Activated CD8-positive, alpha-beta T cell treated with anti-CD3 and anti-CD28 coated beads for 36 hours (primary cell): ENCODE measurements at regions of chr10 and their contacts with region 1.

Region 1: DNA sequence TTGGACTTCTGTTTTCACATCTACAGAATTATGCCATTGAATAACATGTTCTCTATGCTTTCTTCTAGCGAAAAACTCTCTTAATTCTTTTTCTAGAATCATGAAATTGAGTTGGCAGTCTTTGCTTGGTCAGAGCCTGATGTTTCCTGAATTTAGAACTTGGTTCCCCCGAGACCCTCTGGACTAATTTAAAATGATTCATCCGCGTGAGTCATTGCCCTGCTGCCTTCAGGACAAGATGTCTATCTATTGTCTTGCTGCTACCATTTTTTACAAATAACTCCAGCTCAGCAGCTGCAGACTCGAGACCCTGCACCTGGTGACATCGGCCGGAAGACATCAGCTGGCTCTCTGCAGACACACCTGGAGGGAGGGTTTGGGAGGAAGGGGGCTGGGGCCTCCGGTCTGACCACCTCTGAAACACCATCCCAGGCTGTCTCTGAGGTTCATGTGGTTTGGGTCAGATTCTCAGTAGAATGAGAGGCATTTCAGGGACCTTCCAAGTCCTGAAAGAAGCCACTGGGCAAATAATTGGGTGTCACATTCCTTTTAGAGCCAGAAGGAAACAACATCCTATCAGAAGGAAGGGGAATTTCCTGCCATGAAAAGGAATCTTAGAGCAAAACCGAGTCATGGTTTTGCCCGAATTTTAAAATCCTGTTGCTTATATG is 20.9 kb upstream of the KLF6 start:
- DNase-seq: peak; percentile 70
- ATAC-seq: no peak
- H3K4me3 Mint-ChIP-seq: peak overlapping the region; percentile 45
- H3K27ac Mint-ChIP-seq: no peak overlapping the region
- H3K4me1 Mint-ChIP-seq: peaks cover 68% of the 10 kb centered on the region
- H3K27me3 Mint-ChIP-seq: no peaks in the 10 kb centered on the region
- CTCF ChIP-seq: no peak

Region 2: DNA sequence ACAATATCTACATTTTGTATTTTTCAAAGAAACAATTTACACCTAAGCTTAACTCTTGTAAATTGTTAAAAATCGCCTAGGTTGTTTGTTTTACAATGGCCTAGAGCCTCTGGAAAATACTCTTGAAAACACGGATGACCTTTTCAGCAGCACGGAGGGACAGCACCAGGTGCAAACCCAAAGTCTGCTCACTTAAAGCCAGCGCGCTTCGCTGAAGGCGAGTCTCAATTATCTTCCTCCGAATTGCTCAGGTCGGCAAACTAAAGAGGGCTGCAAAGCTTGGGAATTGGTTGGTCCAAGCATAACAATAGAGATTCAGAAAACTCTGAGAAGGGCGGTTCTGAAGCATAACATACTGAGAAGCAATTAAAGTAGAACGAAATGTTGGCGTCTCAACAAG is 493.5 kb before region 1 on chr10:
- CTCF ChIA-PET with region 1: no interaction called
- POLR2A ChIA-PET with region 1: no interaction called
- intact Hi-C with region 1: no loop called
- DNase-seq: no peak
- ATAC-seq: no peak
- H3K4me3 Mint-ChIP-seq: no peak overlapping the region
- H3K27ac Mint-ChIP-seq: no peak overlapping the region
- H3K4me1 Mint-ChIP-seq: no peaks in the 10 kb centered on the region
- H3K27me3 Mint-ChIP-seq: peaks cover 32% of the 10 kb centered on the region
- CTCF ChIP-seq: no peak

Region 3: DNA sequence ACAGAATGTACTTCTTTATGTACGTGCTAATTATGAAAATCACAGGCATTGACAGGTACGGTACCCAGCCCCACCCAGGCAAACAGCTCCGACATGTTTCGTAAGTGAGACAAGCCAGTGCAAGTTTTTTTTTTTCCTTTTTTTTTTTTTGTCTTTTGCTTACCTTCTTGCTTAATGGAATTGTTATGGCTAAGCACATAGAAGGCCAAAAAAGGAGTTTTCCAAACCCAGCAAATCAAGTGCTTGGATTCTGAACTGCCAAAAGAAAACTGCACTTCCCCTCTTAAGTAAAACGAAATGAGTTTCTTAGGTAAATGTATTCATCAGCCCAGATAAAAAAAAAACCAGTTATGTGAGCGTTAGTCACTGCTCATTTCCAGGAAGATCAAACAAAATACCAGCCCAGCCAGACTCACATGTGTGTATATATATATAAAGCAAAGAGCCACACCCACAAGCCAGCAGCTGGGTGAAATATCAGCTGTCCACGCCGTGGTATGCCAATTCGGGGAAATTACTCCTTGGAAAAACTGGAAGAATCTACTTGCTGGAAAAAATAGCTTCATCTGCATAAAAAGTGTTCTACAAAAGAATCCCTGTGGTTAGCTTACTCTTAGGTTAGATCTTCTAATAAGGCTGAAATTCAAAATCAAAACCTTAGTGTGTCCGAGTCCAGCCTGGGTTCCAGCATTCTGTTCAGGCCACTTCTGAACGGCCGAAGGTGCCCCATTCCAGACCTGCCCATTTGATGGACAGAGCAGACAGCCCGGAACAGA is 28.9 kb before region 1 on chr10:
- CTCF ChIA-PET with region 1: no interaction called
- POLR2A ChIA-PET with region 1: interaction called, 281 read pairs
- intact Hi-C with region 1: loop called (anchors 2 kb)
- DNase-seq: peak; percentile 76
- ATAC-seq: peak; percentile 66
- H3K4me3 Mint-ChIP-seq: peak overlapping the region; percentile 56
- H3K27ac Mint-ChIP-seq: peak overlapping the region; percentile 85
- H3K4me1 Mint-ChIP-seq: peaks cover 71% of the 10 kb centered on the region
- H3K27me3 Mint-ChIP-seq: no peaks in the 10 kb centered on the region
- CTCF ChIP-seq: no peak

Region 4: DNA sequence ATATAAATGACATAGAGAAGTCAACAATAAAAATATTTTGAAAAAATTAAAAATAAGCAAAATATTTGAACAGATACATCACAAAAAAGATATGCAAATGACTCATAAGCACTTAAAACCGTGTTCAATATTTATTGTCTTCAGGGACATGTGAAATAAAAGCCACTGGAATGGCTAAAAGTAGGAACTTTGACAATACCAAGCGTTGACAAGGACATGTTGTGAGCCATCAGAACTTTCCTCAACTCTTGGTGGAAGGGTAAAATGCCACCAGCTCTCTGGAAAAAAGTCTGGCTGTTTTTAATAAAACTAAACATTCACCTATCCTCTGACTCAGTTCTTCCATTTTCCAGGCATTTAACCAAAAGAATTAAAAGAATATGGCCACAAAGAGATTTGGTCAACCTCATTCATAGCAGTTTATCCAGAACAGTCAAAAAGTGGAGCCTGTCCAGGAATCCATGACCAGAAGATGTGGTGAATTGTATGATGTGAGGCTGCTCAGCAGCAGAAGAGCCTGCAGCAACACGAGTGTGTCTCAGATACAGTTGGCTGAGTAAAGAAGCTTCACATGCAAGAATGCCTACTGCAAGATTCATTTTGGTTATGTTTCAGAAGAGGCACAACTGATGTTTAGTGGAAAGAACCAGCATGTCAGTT is 13.8 kb before region 1 on chr10:
- CTCF ChIA-PET with region 1: no interaction called
- POLR2A ChIA-PET with region 1: interaction called, 10 read pairs
- intact Hi-C with region 1: no loop called
- DNase-seq: no peak
- ATAC-seq: peak; percentile 53
- H3K4me3 Mint-ChIP-seq: no peak overlapping the region
- H3K27ac Mint-ChIP-seq: no peak overlapping the region
- H3K4me1 Mint-ChIP-seq: peaks cover 19% of the 10 kb centered on the region
- H3K27me3 Mint-ChIP-seq: no peaks in the 10 kb centered on the region
- CTCF ChIP-seq: no peak

Region 5: DNA sequence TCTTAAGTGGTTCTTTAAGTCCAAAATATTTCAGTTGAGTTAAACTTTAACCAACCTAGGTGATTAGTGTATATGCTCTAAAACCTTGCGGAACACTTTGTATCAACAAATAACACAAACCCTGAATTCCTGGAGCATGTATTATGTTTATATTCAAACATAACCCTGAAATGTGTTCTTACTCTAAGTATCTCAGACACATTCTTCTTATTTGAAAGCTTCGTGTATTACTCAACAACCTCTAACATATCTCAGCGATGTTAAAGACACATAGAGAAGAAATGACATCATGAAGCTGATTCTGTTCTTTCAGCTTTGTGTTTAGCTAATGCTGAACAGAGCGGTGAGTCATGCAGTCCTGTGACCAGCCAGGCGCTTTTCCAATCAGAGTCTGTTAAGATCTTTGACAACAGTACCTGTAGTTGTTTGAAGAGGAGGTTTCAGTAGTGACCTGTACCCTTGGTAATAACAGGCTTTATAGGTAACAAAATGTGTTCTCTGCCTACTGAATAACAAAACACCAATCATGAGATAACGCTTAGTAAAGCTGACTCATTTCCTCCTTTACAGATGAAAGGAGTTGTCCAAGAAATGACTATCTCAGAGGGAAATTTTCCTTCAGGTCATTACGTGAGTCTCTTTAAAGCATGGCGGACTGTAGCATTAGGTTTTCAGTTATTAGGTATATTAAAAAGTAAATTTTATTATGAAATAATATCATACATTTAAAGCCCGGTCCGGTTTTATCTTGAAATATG is 46.4 kb after region 1 on chr10:
- CTCF ChIA-PET with region 1: no interaction called
- POLR2A ChIA-PET with region 1: interaction called, 4 read pairs
- intact Hi-C with region 1: loop called (anchors 5 kb)
- DNase-seq: peak; percentile 85
- ATAC-seq: peak; percentile 92
- H3K4me3 Mint-ChIP-seq: peak overlapping the region; percentile 36
- H3K27ac Mint-ChIP-seq: peak overlapping the region; percentile 91
- H3K4me1 Mint-ChIP-seq: peaks cover 47% of the 10 kb centered on the region
- H3K27me3 Mint-ChIP-seq: no peaks in the 10 kb centered on the region
- CTCF ChIP-seq: no peak

Region 6: GRCh38 chr10:3869036-3869435 is 63.1 kb after region 1 on chr10:
- CTCF ChIA-PET with region 1: no interaction called
- POLR2A ChIA-PET with region 1: interaction called, 17 read pairs
- intact Hi-C with region 1: loop called (anchors 2 kb)
- DNase-seq: no peak
- ATAC-seq: peak; percentile 18
- H3K4me3 Mint-ChIP-seq: no peak overlapping the region
- H3K27ac Mint-ChIP-seq: peak overlapping the region; percentile 53
- H3K4me1 Mint-ChIP-seq: peaks cover 63% of the 10 kb centered on the region
- H3K27me3 Mint-ChIP-seq: no peaks in the 10 kb centered on the region
- CTCF ChIP-seq: no peak

Region 7: DNA sequence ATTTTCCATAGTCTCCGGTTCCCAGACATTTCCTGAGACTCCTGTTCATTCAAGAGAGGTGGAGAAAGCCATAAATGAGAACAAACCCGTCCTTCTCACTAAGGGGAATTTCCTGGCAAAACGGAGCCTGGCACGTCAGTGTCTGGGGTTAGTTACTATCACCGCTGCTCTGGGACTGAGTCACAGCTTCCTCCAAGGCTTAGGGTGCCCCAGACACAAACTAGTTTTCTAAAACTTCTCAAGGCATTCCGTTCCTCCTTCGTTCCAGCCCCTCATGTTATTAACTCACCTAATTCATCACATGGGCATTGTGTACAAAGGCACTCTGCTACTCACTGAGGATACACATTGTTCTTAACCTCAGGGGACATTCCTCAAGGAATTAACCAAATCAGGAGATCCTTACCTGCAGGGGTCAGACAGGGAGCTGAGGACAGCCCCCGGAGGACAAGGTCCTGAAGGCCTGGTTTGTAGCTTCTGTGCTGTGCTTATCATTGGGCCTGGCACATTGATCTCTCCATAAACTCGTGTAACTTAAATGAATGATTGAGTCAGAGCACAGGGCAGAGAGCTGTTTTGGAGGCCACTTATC is 82.1 kb after region 1 on chr10:
- CTCF ChIA-PET with region 1: no interaction called
- POLR2A ChIA-PET with region 1: no interaction called
- intact Hi-C with region 1: no loop called
- DNase-seq: peak; percentile 70
- ATAC-seq: peak; percentile 75
- H3K4me3 Mint-ChIP-seq: peak overlapping the region; percentile 43
- H3K27ac Mint-ChIP-seq: peak overlapping the region; percentile 95
- H3K4me1 Mint-ChIP-seq: peaks cover 38% of the 10 kb centered on the region
- H3K27me3 Mint-ChIP-seq: no peaks in the 10 kb centered on the region
- CTCF ChIP-seq: no peak

Region 8: DNA sequence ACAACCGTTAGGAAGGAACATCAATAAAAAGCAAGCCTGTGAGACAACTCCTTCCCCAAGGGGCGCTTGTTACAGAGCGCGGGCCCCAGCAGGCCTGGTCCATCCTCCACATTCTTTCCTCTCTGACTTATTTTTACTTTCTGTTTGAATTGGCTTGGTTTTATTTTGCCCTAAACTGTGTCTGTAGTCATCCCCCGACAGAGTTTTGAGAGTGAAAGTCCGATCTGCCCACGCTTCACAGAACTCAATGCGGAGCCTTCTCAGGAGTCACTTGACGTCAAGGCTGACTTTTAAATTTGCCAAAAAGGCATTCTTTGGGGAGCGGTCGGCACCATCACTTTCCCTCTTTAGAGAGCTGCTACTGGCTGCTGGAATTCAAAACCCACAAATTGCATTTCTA is 129.2 kb after region 1 on chr10:
- CTCF ChIA-PET with region 1: no interaction called
- POLR2A ChIA-PET with region 1: interaction called, 7 read pairs
- intact Hi-C with region 1: loop called (anchors 5 kb)
- DNase-seq: peak; percentile 91
- ATAC-seq: peak; percentile 98
- H3K4me3 Mint-ChIP-seq: peak overlapping the region; percentile 10
- H3K27ac Mint-ChIP-seq: peak overlapping the region; percentile 91
- H3K4me1 Mint-ChIP-seq: peaks cover 53% of the 10 kb centered on the region
- H3K27me3 Mint-ChIP-seq: no peaks in the 10 kb centered on the region
- CTCF ChIP-seq: no peak

Region 9: GRCh38 chr10:4131407-4132228 is 325.7 kb after region 1 on chr10:
- CTCF ChIA-PET with region 1: no interaction called
- POLR2A ChIA-PET with region 1: no interaction called
- intact Hi-C with region 1: loop called (anchors 10 kb)
- DNase-seq: peak; percentile 57
- ATAC-seq: peak; percentile 86
- H3K4me3 Mint-ChIP-seq: no peak overlapping the region
- H3K27ac Mint-ChIP-seq: no peak overlapping the region
- H3K4me1 Mint-ChIP-seq: peaks cover 45% of the 10 kb centered on the region
- H3K27me3 Mint-ChIP-seq: no peaks in the 10 kb centered on the region
- CTCF ChIP-seq: no peak